Dendritic cell treated with granulocyte-macrophage colony-stimulating factor and Interleukin-4, amounts not matched to agents 40 ng/mL and 50 ng/mL, for 4 days (primary cell): ENCODE measurements at regions of chr6 and their contacts with region 1.

Region 1: DNA sequence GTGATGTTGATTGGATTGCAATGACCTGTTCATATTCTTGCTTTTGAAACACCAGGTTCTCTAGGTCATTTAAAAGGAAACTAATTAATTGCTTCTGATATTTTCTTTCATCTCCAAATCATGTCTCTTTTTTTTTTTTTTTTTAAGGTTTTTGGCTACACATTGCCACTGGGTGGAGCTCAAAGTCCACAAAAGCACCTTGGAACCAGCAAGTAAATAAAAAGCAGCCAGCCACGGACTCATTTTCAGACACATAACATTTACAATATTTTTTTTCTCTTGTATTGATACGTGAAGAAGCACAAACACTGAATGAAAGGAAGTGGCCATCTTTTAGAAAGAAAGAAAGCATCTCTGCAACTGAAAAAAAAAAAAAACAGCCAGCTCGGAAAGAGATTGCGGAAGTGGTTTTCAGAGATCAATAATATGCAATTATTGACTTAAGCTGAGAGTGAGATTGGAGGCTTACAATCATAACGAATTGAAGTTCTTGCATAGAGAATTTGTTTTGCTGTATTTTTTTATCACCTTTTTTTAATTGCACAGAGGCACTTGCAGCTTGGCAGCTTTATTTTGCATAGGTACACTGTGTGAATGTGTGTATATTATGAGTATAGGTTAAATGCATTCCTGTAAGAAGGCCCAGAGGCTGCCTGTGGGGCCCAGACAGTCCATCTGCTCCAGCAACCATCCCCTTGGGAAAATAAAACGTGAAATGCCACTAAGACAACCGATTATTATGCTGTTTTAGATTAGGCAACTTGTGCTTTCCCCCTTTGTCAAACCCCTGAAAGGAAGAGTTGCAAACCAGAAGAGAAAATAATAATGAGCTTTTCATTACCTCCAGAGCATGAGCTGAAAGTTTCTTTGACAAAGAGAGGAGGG is 28.2 kb downstream of the CGA start:
- H3K4me3 Mint-ChIP-seq: no peak overlapping the region
- H3K27ac Mint-ChIP-seq: no peak overlapping the region
- H3K4me1 Mint-ChIP-seq: peaks cover 6% of the 10 kb centered on the region
- H3K27me3 Mint-ChIP-seq: peaks cover 6% of the 10 kb centered on the region

Region 2: DNA sequence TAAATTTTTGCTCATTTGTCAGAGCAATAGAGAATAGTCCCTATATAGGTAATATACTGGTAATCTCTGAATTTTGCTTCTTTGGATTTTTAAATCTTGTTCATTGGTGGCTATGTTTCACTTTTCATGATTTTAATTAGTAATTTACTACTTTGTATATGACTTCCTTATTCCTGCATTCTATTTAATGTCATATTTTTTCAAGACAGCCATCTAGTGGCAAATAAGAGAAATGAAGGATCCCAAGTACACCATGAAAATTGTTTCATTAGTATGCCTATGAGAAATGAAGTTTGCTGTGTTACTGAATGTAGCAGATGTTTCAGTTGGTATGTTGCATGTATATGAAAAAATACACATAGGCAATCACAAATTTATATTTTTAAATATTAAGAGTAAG is 171.1 kb after region 1 on chr6:
- intact Hi-C with region 1: loop called (anchors 5 kb)
- H3K4me3 Mint-ChIP-seq: no peak overlapping the region
- H3K27ac Mint-ChIP-seq: no peak overlapping the region
- H3K4me1 Mint-ChIP-seq: no peaks in the 10 kb centered on the region
- H3K27me3 Mint-ChIP-seq: no peaks in the 10 kb centered on the region

Region 3: GRCh38 chr6:88780714-88781389 is 1714.2 kb after region 1 on chr6:
- intact Hi-C with region 1: loop called (anchors 5 kb)
- H3K4me3 Mint-ChIP-seq: no peak overlapping the region
- H3K27ac Mint-ChIP-seq: no peak overlapping the region
- H3K4me1 Mint-ChIP-seq: peaks cover 6% of the 10 kb centered on the region
- H3K27me3 Mint-ChIP-seq: no peaks in the 10 kb centered on the region

Region 4: GRCh38 chr6:88870717-88871330 is 1804.1 kb after region 1 on chr6:
- intact Hi-C with region 1: loop called (anchors 10 kb)
- H3K4me3 Mint-ChIP-seq: no peak overlapping the region
- H3K27ac Mint-ChIP-seq: no peak overlapping the region
- H3K4me1 Mint-ChIP-seq: no peaks in the 10 kb centered on the region
- H3K27me3 Mint-ChIP-seq: no peaks in the 10 kb centered on the region